Activated naive CD4-positive, alpha-beta T cell treated with anti-CD3 and anti-CD28 coated beads for 36 hours (primary cell): ENCODE measurements at regions of chr1 and their contacts with region 1.

Region 1: DNA sequence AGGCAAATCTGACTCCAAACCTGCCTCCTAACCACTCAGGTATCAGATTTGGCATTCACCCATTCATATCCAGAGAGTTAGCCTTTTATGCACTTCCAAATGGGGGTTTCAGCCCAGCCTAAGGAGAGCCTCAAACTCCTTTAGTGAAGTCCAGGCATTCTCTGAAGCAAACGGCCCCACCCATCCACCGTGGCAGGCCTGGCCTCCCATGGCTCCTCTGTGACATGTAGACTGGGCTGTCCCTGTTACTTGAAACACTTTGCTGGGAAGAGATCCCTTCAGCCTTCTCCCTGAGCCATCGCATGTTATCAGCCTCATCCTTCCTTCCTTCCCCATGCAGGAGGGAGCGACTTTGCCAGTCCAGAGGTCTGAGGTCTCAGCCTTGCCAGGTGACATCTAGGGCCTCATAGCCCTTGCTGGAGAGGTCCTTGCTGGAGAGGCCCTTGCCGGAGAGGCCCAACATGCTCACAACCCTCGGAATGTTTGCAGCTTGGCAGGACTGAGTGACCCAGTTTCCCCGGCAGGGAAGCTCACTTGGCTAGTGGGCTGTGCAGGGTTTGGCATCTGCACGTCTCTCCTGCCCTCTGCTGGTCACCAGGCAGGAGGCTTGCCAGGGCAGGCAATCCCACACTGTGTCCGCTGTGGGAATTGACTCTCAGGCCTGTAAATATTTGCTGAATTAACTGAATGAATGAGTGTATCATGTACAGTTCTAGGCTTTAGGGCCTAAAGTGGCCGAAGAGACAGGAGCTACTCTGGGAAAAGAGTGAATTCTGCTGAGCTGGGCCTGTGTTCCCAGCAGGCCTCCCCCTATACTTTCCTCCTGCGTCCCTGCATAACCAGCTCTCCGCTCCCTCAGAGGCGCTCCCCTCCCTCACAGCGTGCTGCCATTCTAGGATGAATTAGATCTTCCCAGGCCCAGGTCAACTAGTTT is 26.7 kb upstream of the RBM15 start:
- DNase-seq: peak; percentile 81
- H3K4me3 Mint-ChIP-seq: no peak overlapping the region
- H3K27ac Mint-ChIP-seq: no peak overlapping the region
- H3K4me1 Mint-ChIP-seq: no peaks in the 10 kb centered on the region
- H3K27me3 Mint-ChIP-seq: no peaks in the 10 kb centered on the region

Region 2: GRCh38 chr1:110196917-110197765 is 115.3 kb before region 1 on chr1:
- CTCF ChIA-PET with region 1: interaction called, 644 read pairs
- intact Hi-C with region 1: no loop called
- DNase-seq: peak; percentile 65
- H3K4me3 Mint-ChIP-seq: no peak overlapping the region
- H3K27ac Mint-ChIP-seq: no peak overlapping the region
- H3K4me1 Mint-ChIP-seq: no peaks in the 10 kb centered on the region
- H3K27me3 Mint-ChIP-seq: no peaks in the 10 kb centered on the region

Region 3: GRCh38 chr1:110266834-110267233 is 45.6 kb before region 1 on chr1:
- CTCF ChIA-PET with region 1: no interaction called
- intact Hi-C with region 1: no loop called
- DNase-seq: no peak
- H3K4me3 Mint-ChIP-seq: no peak overlapping the region
- H3K27ac Mint-ChIP-seq: no peak overlapping the region
- H3K4me1 Mint-ChIP-seq: peaks cover 2% of the 10 kb centered on the region
- H3K27me3 Mint-ChIP-seq: peaks cover 4% of the 10 kb centered on the region

Region 4: GRCh38 chr1:110328274-110328673 is 15.8 kb after region 1 on chr1:
- CTCF ChIA-PET with region 1: interaction called, 20 read pairs
- intact Hi-C with region 1: no loop called
- DNase-seq: no peak
- H3K4me3 Mint-ChIP-seq: no peak overlapping the region
- H3K27ac Mint-ChIP-seq: no peak overlapping the region
- H3K4me1 Mint-ChIP-seq: no peaks in the 10 kb centered on the region
- H3K27me3 Mint-ChIP-seq: no peaks in the 10 kb centered on the region